Common myeloid progenitor, CD34-positive (primary cell): ENCODE measurements at regions of chr4 and their contacts with region 1.

Region 1: DNA sequence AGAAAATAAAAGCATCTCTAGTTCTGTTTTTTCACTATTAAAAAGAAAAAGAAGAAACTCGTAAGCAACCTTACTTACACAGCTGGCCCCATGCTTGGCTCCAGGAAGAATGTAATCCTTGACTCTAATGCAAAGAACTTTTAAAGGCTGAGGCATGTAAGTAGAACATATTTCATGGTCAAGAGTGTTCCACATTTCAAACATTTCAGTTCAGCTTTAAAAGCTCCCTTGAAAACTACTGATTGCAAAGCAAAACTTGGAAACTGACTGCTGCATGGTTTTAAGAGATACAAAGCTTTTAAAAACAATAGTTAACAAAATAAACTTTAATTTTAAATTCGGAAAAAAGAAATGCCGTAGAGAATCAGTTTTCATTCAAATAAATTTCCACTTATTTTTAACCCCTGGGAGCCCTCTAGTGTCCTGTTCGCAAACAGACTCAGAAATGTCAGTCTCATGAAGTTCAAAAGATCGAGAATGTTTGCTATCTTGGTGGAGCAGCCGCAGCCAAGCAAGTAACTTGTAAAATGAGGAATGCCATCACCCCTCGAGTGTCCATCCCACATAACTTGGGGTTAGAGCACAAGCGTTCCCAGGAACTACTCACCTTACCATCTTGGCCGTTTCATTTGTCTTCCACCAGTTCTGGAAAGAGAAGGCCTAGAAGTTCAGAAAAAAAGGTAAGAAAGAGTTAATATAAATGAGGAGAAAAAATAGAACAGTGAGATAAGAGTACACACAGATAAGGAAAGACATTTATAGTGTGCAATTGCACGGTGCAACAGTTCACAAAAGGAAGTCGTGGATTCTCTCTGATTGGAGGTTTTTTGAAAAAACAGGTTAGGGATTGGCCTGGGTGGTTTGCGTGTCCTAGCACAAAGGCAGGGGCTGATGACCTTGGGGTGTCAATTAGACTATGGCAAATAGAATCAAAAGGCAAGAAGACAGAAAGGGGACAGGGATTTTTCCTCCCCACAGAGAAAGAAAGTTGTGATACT is at the start of gene GASK1B:
- DNase-seq: peak; percentile 65 to 73 (median 71)
- H3K4me3 ChIP-seq: peak within 1 kb of the TSS in 6 of 7 experiments; percentile 54 to 90 (median 69)
- H3K27ac ChIP-seq: peak within 1 kb of the TSS; percentile 11 to 16
- H3K4me1 ChIP-seq: peaks cover 6 to 56% (median 29%) of the 10 kb centered on the region in 4 experiments
- H3K27me3 ChIP-seq: peaks cover 0 to 2% (median 0%) of the 10 kb centered on the region in 5 experiments

Region 2: GRCh38 chr4:157957905-157958304 is 214.7 kb before region 1 on chr4:
- CTCF ChIA-PET with region 1: no interaction called
- POLR2A ChIA-PET with region 1: no interaction called
- DNase-seq: no peak
- H3K4me3 ChIP-seq: no peak overlapping the region
- H3K27ac ChIP-seq: no peak overlapping the region
- H3K4me1 ChIP-seq: no peaks in the 10 kb centered on the region
- H3K27me3 ChIP-seq: no peaks in the 10 kb centered on the region

Region 3: DNA sequence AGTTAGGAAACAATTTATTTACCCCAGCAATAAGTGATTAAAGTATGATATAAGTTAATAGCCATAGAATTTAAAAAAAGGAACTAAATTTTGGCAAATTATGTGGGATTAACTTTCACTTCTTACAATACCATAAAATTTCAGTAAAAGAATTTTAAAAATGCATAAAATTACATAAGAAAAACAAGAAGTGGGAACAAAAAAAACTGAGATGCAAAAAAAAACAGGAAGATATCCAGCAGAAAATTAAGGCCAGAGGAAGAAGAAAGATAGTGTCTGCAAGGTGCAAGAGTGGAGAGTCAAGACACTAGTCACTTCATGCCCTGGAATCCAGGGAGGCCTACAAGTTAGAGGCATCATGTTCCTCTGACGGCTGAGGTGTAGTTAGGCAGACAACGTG is 183.9 kb before region 1 on chr4:
- CTCF ChIA-PET with region 1: interaction called, 15 read pairs
- POLR2A ChIA-PET with region 1: no interaction called
- DNase-seq: no peak
- H3K4me3 ChIP-seq: no peak overlapping the region
- H3K27ac ChIP-seq: no peak overlapping the region
- H3K4me1 ChIP-seq: peaks cover 0 to 22% (median 10%) of the 10 kb centered on the region in 4 experiments
- H3K27me3 ChIP-seq: no peaks in the 10 kb centered on the region

Region 4: GRCh38 chr4:158161551-158162354 is 10.8 kb before region 1 on chr4:
- CTCF ChIA-PET with region 1: interaction called, 11 read pairs
- POLR2A ChIA-PET with region 1: no interaction called
- DNase-seq: peak; percentile 19 to 77 (median 69)
- H3K4me3 ChIP-seq: peak overlapping the region in 1 of 7 experiments; percentile 15
- H3K27ac ChIP-seq: no peak overlapping the region
- H3K4me1 ChIP-seq: peaks cover 0 to 10% (median 9%) of the 10 kb centered on the region in 4 experiments
- H3K27me3 ChIP-seq: peaks cover 0 to 11% (median 0%) of the 10 kb centered on the region in 5 experiments

Region 5: DNA sequence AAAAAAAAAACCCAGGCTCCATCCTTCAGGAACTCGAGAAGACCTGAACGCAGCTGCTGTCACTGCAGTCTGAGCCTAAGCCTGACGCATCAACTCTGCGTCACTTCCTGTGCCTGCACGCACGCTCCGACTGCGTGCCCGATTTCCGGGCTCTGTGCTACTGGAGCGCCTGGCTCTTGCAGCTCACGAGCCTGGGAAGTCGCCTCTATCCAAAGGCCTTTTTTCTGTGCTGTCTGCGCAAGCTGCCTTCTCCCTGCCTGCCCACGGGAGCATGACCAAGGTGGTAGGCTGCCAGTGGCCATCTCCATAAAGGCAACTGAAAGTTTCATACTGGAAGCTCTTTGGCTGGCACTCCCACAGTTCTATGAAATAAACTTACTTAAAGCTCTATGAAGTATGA is 10.2 kb after region 1 on chr4:
- CTCF ChIA-PET with region 1: interaction called, 14 read pairs
- POLR2A ChIA-PET with region 1: no interaction called
- DNase-seq: no peak
- H3K4me3 ChIP-seq: no peak overlapping the region
- H3K27ac ChIP-seq: no peak overlapping the region
- H3K4me1 ChIP-seq: no peaks in the 10 kb centered on the region
- H3K27me3 ChIP-seq: no peaks in the 10 kb centered on the region

Region 6: GRCh38 chr4:158193171-158193749 is 20.7 kb after region 1 on chr4:
- CTCF ChIA-PET with region 1: interaction called, 28 read pairs
- POLR2A ChIA-PET with region 1: no interaction called
- DNase-seq: peak; percentile 47 to 61 (median 54)
- H3K4me3 ChIP-seq: peak overlapping the region in 1 of 7 experiments; percentile 55
- H3K27ac ChIP-seq: no peak overlapping the region
- H3K4me1 ChIP-seq: peaks cover 0 to 3% (median 0%) of the 10 kb centered on the region in 4 experiments
- H3K27me3 ChIP-seq: no peaks in the 10 kb centered on the region

Region 7: DNA sequence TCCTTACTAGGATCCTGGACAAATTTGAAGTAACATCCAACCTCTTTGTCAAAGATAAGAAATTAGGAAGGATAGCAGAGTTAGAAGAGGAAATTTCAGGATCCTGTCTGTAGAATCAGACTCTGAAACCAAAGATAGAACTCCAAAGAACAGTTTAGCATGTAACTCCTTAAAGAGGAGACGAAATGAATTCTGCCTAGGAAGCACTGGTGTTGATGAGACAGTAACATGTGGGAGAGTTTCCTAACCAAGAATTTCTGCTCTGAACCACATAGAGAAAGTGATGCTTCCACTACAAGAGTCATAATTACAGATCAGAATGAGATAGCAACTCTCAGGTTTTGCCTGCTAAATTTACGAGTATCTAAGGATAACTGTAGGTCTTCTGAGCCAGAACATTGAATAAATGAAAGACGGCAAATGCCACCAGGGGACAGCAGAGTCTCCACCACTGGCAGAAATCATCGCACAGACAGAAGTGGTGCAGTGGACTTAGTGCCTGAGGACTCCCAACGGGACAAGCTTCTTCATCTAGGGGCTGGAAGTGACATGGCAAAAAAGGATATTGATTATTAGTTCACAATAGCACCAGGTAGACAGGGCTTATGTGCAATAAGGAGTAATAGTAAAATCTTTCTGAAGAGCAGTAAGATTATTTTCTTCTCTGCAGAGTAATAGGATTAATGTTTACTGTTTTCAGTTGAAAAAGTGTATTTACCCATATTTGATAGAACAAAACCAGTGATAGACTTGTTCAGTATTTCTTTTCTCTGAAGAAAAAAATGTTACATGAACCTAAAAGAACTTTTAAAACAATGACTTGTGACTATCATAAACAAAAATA is 557.4 kb after region 1 on chr4:
- CTCF ChIA-PET with region 1: no interaction called
- POLR2A ChIA-PET with region 1: no interaction called
- DNase-seq: peak; percentile 75 to 84 (median 78)
- H3K4me3 ChIP-seq: no peak overlapping the region
- H3K27ac ChIP-seq: no peak overlapping the region
- H3K4me1 ChIP-seq: no peaks in the 10 kb centered on the region
- H3K27me3 ChIP-seq: peaks cover 0 to 2% (median 0%) of the 10 kb centered on the region in 5 experiments